H1 (cell line): ENCODE measurements at regions of chr1 and their contacts with region 1.

Region 1: DNA sequence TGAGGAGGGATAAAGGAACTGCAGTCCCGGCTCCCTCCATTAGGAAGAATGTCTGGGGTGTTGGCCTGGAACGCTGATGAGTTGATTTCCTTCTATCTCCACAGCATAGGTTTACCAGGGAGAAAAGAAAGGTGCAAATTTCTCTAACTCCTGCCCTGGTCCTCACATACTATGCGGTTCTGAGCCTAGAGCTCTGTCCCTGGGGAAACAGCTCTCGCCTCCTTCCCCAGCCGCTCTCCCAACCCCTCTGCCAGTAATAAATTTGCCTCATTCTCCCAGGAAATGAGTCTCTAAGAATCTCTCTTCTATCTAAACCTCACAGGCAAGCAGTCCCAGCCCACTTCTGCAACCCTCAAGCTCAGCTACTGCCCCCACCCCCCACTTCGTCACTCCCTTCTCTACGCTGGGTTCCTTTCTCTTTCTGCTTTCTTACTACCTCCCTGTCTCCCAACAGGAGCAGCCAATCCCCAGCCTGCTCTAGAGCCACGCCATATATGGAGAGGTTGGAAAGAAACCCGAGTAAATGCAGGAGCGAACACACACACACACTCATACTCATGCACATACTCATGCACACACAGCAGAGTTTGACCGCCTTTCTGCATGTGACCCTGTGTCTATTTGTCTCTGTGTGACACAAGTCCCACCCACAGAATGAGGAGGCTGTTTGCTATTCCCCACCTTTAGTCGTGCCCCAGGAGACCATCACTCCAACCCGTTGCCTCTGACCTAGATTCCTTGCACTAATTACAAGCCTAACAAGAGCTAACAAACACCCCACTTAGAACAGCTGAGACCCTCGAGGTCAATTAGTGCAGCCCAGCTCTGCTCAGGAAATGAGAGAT is 13.4 kb downstream of the PLEKHO1 start:
- DNase-seq: peak; percentile 79 to 90
- H3K4me3 ChIP-seq: peak overlapping the region; percentile 12 to 55 (median 46); a peak in 7 of 8 replicates
- H3K27ac ChIP-seq: peak overlapping the region; percentile 98
- H3K4me1 ChIP-seq: peaks cover 12 to 30% (median 20%) of the 10 kb centered on the region in 4 experiments
- H3K27me3 ChIP-seq: no peaks in the 10 kb centered on the region
- CTCF ChIP-seq: no peak
- EP300 ChIP-seq: peak in 1 of 2 experiments; percentile 80; a peak in 1 of 3 replicates
- POLR2A ChIP-seq: peak; percentile 80 to 82
- RAD21 ChIP-seq: no peak

Region 2: GRCh38 chr1:149949911-149950310 is 213.2 kb before region 1 on chr1:
- CTCF ChIA-PET with region 1: no interaction called
- POLR2A ChIA-PET with region 1: no interaction called
- DNase-seq: no peak
- H3K4me3 ChIP-seq: no peak overlapping the region
- H3K27ac ChIP-seq: no peak overlapping the region
- H3K4me1 ChIP-seq: no peaks in the 10 kb centered on the region
- H3K27me3 ChIP-seq: no peaks in the 10 kb centered on the region
- CTCF ChIP-seq: no peak
- EP300 ChIP-seq: no peak
- POLR2A ChIP-seq: no peak
- RAD21 ChIP-seq: no peak

Region 3: GRCh38 chr1:150072959-150073358 is 90.1 kb before region 1 on chr1:
- CTCF ChIA-PET with region 1: interaction called, 34 read pairs
- POLR2A ChIA-PET with region 1: interaction called, 6 read pairs
- DNase-seq: no peak
- H3K4me3 ChIP-seq: no peak overlapping the region
- H3K27ac ChIP-seq: no peak overlapping the region
- H3K4me1 ChIP-seq: no peaks in the 10 kb centered on the region
- H3K27me3 ChIP-seq: no peaks in the 10 kb centered on the region
- CTCF ChIP-seq: no peak
- EP300 ChIP-seq: no peak
- POLR2A ChIP-seq: no peak
- RAD21 ChIP-seq: no peak

Region 4: DNA sequence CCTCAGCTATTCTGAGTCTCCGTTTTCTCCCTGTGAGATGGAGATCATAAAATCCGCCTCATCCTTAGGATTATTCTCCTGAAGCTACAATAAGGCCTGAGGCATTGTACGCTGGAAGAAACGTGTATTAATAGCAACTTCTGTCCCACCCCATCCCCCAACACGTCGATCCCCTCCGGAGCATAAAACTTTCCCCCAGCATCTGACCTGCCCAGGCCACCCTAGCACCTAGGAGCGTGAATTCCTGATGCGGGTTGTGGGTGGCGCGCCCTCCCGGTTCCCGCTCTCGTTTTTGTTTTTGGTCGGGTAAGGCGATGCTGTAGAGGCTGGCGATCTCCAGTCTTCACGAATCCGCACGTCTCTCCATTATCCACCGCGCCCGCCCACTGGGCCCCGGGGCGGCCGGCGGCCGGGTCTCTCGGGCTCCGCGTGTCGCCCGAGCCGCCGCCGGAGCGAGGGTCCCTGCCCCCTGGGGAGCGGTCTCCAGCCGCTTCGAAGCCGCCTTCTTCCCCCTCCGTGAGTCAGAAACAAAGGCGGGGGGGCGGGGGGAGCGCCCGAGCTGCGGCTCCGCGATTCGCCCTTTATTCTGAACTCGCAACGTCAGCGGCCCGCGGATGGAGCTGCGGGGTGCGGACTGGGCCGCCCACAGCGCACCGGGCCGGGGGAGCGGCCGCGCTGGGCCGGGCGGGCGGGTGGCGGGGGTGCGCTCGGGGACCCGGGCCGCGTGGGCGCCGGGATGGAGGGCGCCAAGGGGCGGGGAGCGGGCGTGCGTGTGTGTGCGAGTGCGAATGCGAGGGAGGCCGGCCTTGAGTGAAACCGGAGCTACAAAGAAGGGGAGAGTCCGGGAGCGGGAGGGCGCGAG is 13.6 kb before region 1 on chr1 and contains the start of gene PLEKHO1:
- CTCF ChIA-PET with region 1: interaction called, 20 read pairs
- POLR2A ChIA-PET with region 1: interaction called, 87 read pairs
- DNase-seq: peak in 1 of 2 experiments; percentile 68
- H3K4me3 ChIP-seq: peak within 1 kb of the TSS; percentile 73 to 99 (median 79)
- H3K27ac ChIP-seq: no peak within 1 kb of the TSS; the same call in 1 of the 2 replicates
- H3K4me1 ChIP-seq: peaks cover 0 to 14% (median 5%) of the 10 kb centered on the region in 4 experiments; a peak in 6 of 7 replicates
- H3K27me3 ChIP-seq: peaks cover 0 to 2% (median 0%) of the 10 kb centered on the region in 4 experiments; a peak in 1 of 7 replicates
- CTCF ChIP-seq: no peak
- EP300 ChIP-seq: peak in 1 of 2 experiments; percentile 1; a peak in 1 of 3 replicates
- POLR2A ChIP-seq: peak; percentile 29 to 61
- RAD21 ChIP-seq: no peak
- total RNA-seq, gene PLEKHO1: 35.0 and 37.0 TPM in 2 replicates

Region 5: GRCh38 chr1:150176593-150176992 is 13.5 kb after region 1 on chr1:
- CTCF ChIA-PET with region 1: interaction called, 6 read pairs
- POLR2A ChIA-PET with region 1: interaction called, 15 read pairs
- DNase-seq: no peak
- H3K4me3 ChIP-seq: no peak overlapping the region
- H3K27ac ChIP-seq: no peak overlapping the region
- H3K4me1 ChIP-seq: no peaks in the 10 kb centered on the region
- H3K27me3 ChIP-seq: no peaks in the 10 kb centered on the region
- CTCF ChIP-seq: no peak
- EP300 ChIP-seq: no peak
- POLR2A ChIP-seq: no peak
- RAD21 ChIP-seq: no peak

Region 6: GRCh38 chr1:150186789-150187559 is 23.9 kb after region 1 on chr1:
- CTCF ChIA-PET with region 1: interaction called, 18 read pairs
- POLR2A ChIA-PET with region 1: interaction called, 5 read pairs
- DNase-seq: no peak
- H3K4me3 ChIP-seq: no peak overlapping the region
- H3K27ac ChIP-seq: no peak overlapping the region
- H3K4me1 ChIP-seq: peaks cover 0 to 3% (median 0%) of the 10 kb centered on the region in 4 experiments; a peak in 1 of 7 replicates
- H3K27me3 ChIP-seq: no peaks in the 10 kb centered on the region
- CTCF ChIP-seq: peak in 2 of 3 experiments; percentile 4 to 38; a peak in 2 of 4 replicates
- EP300 ChIP-seq: no peak
- POLR2A ChIP-seq: no peak
- RAD21 ChIP-seq: peak; percentile 75 to 79